ENCODE measurements at regions of chr9 and their contacts with region 1.

Region 1: DNA sequence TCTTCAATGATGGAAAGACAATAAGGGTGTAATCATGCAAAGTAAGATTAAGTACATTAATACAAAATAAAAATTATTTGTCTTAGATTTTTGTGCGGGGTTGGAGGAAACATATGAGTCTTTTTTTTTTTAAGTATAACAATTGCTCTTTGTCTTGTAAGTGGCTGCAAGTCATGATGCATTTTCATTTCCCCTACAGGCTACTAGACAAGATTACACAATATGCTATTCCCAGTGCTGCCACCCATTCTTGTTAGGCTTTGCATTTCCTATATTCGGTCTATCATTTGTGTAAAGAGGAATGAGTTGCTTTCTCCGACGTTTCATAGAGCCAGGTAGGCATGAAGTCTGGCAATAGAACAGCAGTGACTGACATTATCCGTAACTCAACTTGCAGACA is 294.2 kb upstream of the CYLC2 start:
- DNase-seq: no peak
- H3K4me3 ChIP-seq: no peak overlapping the region
- H3K4me3 Mint-ChIP-seq: no peak overlapping the region
- H3K27ac ChIP-seq: no peak overlapping the region
- H3K27ac Mint-ChIP-seq: no peak overlapping the region
- H3K4me1 ChIP-seq: no peaks in the 10 kb centered on the region
- H3K4me1 Mint-ChIP-seq: no peaks in the 10 kb centered on the region
- H3K27me3 ChIP-seq: no peaks in the 10 kb centered on the region
- H3K27me3 Mint-ChIP-seq: no peaks in the 10 kb centered on the region

Region 2: GRCh38 chr9:102631559-102631958 is 69.4 kb before region 1 on chr9:
- CTCF ChIA-PET with region 1: no interaction called
- POLR2A ChIA-PET with region 1: no interaction called
- intact Hi-C with region 1: loop called (anchors 10 kb)
- DNase-seq: no peak
- H3K4me3 ChIP-seq: no peak overlapping the region
- H3K4me3 Mint-ChIP-seq: no peak overlapping the region
- H3K27ac ChIP-seq: no peak overlapping the region
- H3K27ac Mint-ChIP-seq: no peak overlapping the region
- H3K4me1 ChIP-seq: no peaks in the 10 kb centered on the region
- H3K4me1 Mint-ChIP-seq: no peaks in the 10 kb centered on the region
- H3K27me3 ChIP-seq: no peaks in the 10 kb centered on the region
- H3K27me3 Mint-ChIP-seq: no peaks in the 10 kb centered on the region

Region 3: DNA sequence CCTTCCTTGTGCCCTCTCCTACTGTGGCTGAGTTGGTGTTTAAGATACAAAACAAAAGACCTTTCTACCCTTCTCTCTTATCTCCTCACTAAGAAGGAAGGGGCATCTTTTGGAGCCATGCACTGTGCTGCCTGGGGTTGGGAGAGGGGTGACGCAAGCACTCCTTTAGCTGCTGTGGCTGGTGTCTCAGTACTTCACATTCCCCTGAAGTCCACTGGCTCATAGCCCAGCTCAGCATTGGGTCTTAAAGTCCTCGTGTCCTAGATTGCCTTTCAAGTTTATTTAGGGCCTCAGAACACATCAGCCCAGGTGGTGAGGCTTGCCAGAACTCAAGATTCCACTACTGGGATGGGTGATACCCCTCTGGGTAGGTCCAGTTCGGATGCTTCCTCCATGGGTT is 31.7 kb before region 1 on chr9:
- CTCF ChIA-PET with region 1: no interaction called
- POLR2A ChIA-PET with region 1: no interaction called
- intact Hi-C with region 1: no loop called
- DNase-seq: no peak
- H3K4me3 ChIP-seq: no peak overlapping the region
- H3K4me3 Mint-ChIP-seq: no peak overlapping the region
- H3K27ac ChIP-seq: no peak overlapping the region
- H3K27ac Mint-ChIP-seq: no peak overlapping the region
- H3K4me1 ChIP-seq: no peaks in the 10 kb centered on the region
- H3K4me1 Mint-ChIP-seq: no peaks in the 10 kb centered on the region
- H3K27me3 ChIP-seq: no peaks in the 10 kb centered on the region
- H3K27me3 Mint-ChIP-seq: no peaks in the 10 kb centered on the region

Region 4: GRCh38 chr9:102740577-102740976 is 39.6 kb after region 1 on chr9:
- CTCF ChIA-PET with region 1: no interaction called
- POLR2A ChIA-PET with region 1: no interaction called
- intact Hi-C with region 1: no loop called
- DNase-seq: no peak
- H3K4me3 ChIP-seq: no peak overlapping the region
- H3K4me3 Mint-ChIP-seq: no peak overlapping the region
- H3K27ac ChIP-seq: no peak overlapping the region
- H3K27ac Mint-ChIP-seq: no peak overlapping the region
- H3K4me1 ChIP-seq: no peaks in the 10 kb centered on the region
- H3K4me1 Mint-ChIP-seq: no peaks in the 10 kb centered on the region
- H3K27me3 ChIP-seq: no peaks in the 10 kb centered on the region
- H3K27me3 Mint-ChIP-seq: no peaks in the 10 kb centered on the region

Measured in CD4-positive, alpha-beta memory T cell (primary cell).